Activated naive CD4-positive, alpha-beta T cell treated with anti-CD3 and anti-CD28 coated beads for 36 hours (primary cell): ENCODE measurements at regions of chr6 and their contacts with region 1.

Region 1: GRCh38 chr6:130282234-130282995 is 59.7 kb upstream of the SAMD3 start:
- DNase-seq: peak; percentile 52
- H3K4me3 Mint-ChIP-seq: no peak overlapping the region
- H3K27ac Mint-ChIP-seq: no peak overlapping the region
- H3K4me1 Mint-ChIP-seq: peaks cover 7% of the 10 kb centered on the region
- H3K27me3 Mint-ChIP-seq: no peaks in the 10 kb centered on the region

Region 2: GRCh38 chr6:130037207-130037811 is 245.1 kb before region 1 on chr6:
- CTCF ChIA-PET with region 1: interaction called, 3 read pairs
- intact Hi-C with region 1: loop called (anchors 1 kb)
- DNase-seq: no peak
- H3K4me3 Mint-ChIP-seq: no peak overlapping the region
- H3K27ac Mint-ChIP-seq: no peak overlapping the region
- H3K4me1 Mint-ChIP-seq: peaks cover 39% of the 10 kb centered on the region
- H3K27me3 Mint-ChIP-seq: no peaks in the 10 kb centered on the region

Region 3: DNA sequence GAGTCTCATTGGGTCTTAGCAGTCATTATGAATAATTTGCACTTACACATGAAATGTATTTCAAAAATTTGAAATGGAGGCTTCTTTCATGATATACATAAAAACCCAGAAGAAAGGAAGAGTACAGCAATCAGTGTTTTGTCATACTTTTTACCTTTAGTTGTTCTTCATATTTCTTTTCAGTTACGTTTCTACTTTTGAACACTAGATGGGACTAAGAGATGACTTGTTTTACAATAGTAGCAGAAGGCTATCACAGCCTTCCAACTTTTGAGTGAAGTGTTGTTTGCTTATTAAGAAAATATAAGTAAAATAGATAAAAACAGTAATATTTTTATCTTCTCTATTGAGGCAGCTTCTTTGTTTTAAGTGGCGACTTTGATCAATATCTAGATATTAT is 205.9 kb before region 1 on chr6:
- CTCF ChIA-PET with region 1: interaction called, 14 read pairs
- intact Hi-C with region 1: loop called (anchors 1 kb)
- DNase-seq: no peak
- H3K4me3 Mint-ChIP-seq: no peak overlapping the region
- H3K27ac Mint-ChIP-seq: no peak overlapping the region
- H3K4me1 Mint-ChIP-seq: peaks cover 14% of the 10 kb centered on the region
- H3K27me3 Mint-ChIP-seq: no peaks in the 10 kb centered on the region

Region 4: GRCh38 chr6:130148181-130148580 is 134.2 kb before region 1 on chr6:
- CTCF ChIA-PET with region 1: interaction called, 3 read pairs
- intact Hi-C with region 1: loop called (anchors 1 kb)
- DNase-seq: peak; percentile 42
- H3K4me3 Mint-ChIP-seq: no peak overlapping the region
- H3K27ac Mint-ChIP-seq: no peak overlapping the region
- H3K4me1 Mint-ChIP-seq: no peaks in the 10 kb centered on the region
- H3K27me3 Mint-ChIP-seq: no peaks in the 10 kb centered on the region

Region 5: GRCh38 chr6:130313206-130313605 is 30.8 kb after region 1 on chr6:
- CTCF ChIA-PET with region 1: no interaction called
- intact Hi-C with region 1: no loop called
- DNase-seq: no peak
- H3K4me3 Mint-ChIP-seq: no peak overlapping the region
- H3K27ac Mint-ChIP-seq: no peak overlapping the region
- H3K4me1 Mint-ChIP-seq: no peaks in the 10 kb centered on the region
- H3K27me3 Mint-ChIP-seq: peaks cover 2% of the 10 kb centered on the region